Natural killer cell (primary cell): ENCODE measurements at regions of chr3 and their contacts with region 1.

Region 1: DNA sequence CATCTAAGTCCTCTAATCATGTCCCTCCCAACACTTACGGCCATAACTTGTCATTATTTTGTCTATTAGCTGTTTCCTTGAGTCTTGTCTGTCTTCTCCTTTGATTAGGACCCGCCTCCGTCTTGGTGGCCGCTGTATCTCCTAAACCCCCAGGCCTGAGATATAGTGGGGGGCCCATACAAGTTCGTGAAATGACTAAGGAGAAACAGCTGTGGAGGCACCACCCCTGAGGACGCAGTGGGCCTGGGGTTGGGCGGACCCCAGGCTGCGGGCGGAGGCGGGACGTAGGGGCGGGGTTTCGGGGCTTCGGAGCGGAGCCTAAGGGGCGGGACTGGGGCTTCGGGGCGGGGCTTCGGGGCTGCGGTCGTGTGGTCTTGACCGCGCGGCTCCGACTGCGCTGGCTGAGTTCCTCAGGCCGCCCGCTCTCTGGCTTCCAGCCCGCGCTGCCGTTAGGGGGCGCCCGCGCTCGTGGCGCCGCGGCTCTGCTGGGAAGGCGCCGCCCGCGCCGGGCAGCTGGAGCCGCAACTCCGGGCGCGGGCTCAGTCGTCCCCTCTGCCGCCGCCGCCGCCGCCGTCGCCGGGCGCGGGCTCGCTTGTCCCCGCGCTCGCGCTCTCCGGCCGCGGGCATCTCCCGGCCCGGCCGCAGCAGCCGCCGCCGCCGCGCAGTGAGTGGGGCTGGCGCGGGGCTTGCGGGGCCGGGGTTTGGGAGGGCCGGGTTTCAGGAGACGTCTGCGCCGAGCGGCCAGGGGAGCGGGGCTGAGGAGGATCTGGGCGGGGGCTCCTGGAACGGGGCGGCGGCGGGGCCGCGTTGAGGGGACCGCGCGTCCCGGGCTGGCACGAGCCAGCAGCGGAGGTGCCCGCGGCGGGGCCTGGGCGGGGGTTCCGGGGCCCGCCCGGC is at the start of gene KCTD6:
- DNase-seq: peak; percentile 91 to 93
- ATAC-seq: peak; percentile 88 to 97 (median 93)
- H3K4me3 ChIP-seq: peak within 1 kb of the TSS; percentile 72
- H3K4me3 Mint-ChIP-seq: peak within 1 kb of the TSS; percentile 94
- H3K27ac ChIP-seq: peak within 1 kb of the TSS; percentile 54
- H3K27ac Mint-ChIP-seq: peak within 1 kb of the TSS; percentile 68 to 87
- H3K4me1 ChIP-seq: peaks cover 25% of the 10 kb centered on the region
- H3K4me1 Mint-ChIP-seq: peaks cover 45 to 57% of the 10 kb centered on the region in 2 donors
- H3K27me3 ChIP-seq: no peaks in the 10 kb centered on the region
- H3K27me3 Mint-ChIP-seq: peaks cover 7 to 10% of the 10 kb centered on the region in 2 donors
- CTCF ChIP-seq: peak; percentile 52
- total RNA-seq, gene KCTD6: 4.5 to 12.9 (median 7.5) TPM

Region 2: DNA sequence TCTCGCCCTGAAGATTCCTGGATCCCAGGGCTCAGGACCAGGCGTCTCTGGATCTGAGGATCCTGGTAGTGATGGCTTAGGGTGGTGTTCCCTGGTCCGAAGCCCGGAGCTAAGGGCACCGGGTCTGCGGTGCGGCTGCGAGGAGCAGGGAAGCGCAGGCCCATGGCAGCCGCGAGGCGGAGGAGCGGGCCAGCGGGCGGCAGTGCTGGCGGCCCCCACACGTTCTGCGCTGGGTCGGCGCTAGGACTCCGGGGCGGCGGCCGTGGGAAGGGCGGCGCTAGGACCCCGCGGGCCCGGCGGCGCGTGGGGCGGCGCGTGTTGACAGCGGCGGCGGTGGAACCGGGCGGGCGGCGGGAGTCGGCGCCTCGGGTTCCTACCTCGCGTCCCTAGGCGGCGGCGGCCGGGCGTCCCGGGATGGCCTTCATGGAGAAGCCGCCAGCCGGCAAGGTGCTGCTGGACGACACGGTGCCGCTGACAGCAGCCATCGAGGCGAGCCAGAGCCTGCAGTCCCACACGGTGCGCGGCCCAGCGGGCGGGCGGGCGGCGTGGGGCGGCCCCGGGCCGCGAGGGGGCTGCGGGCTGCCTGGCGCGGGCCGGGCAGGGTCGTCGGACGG is 159.1 kb before region 1 on chr3 and contains the start of gene PXK:
- intact Hi-C with region 1: loop called (anchors 1 kb)
- DNase-seq: peak; percentile 84 to 85
- ATAC-seq: peak; percentile 79 to 93 (median 90)
- H3K4me3 ChIP-seq: peak within 1 kb of the TSS; percentile 81
- H3K4me3 Mint-ChIP-seq: peak within 1 kb of the TSS; percentile 99
- H3K27ac ChIP-seq: peak within 1 kb of the TSS; percentile 17
- H3K27ac Mint-ChIP-seq: peak within 1 kb of the TSS; percentile 87 to 91
- H3K4me1 ChIP-seq: peaks cover 13% of the 10 kb centered on the region
- H3K4me1 Mint-ChIP-seq: peaks cover 33 to 45% of the 10 kb centered on the region in 2 donors
- H3K27me3 ChIP-seq: no peaks in the 10 kb centered on the region
- H3K27me3 Mint-ChIP-seq: no peaks in the 10 kb centered on the region
- CTCF ChIP-seq: peak; percentile 10
- total RNA-seq, gene PXK: 42.1 to 53.8 (median 48.9) TPM

Region 3: DNA sequence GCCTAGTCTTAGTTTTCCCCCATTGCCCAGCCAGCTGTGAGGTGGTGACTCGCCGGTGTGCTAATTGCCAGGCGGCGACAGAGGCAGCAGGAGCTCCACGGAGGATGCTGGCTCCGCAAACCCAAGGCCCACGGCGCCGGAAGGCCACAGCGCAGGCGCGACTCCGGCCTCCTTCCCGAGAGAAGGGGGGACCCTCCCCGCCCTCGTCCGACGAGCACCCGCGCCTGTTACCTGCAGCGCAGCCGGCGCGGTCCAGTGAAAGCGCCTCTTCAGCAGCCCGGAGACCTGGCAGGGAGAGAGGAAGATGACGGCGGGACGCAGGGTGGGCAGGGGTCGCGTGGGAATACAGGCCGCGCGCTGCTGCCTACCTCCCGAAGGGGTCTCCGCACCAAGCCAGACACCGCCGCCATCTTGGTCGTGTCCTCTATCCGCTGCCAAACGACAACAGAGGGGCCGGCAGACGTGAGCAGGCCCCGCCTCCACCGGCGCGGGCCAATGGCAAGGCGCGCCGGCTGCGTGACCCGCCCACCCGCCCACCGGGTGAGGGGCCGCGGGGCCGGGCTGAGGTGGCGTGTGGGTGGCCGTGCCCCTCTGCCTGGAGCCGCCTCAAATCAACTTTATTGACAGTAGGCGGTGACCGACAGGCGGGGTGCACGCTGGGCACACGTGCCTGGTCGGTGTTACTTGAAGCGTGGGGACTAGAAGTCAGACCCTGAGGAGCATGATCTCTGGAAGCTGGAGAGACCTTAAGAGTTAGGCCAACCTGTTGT is 58.2 kb before region 1 on chr3 and contains the start of gene PDHB:
- intact Hi-C with region 1: loop called (anchors 2 kb)
- DNase-seq: peak; percentile 83 to 93
- ATAC-seq: peak; percentile 94 to 98 (median 95)
- H3K4me3 ChIP-seq: peak within 1 kb of the TSS; percentile 86
- H3K4me3 Mint-ChIP-seq: peak within 1 kb of the TSS; percentile 90
- H3K27ac ChIP-seq: peak within 1 kb of the TSS; percentile 82
- H3K27ac Mint-ChIP-seq: peak within 1 kb of the TSS; percentile 89 to 96
- H3K4me1 ChIP-seq: peaks cover 12% of the 10 kb centered on the region
- H3K4me1 Mint-ChIP-seq: peaks cover 19 to 22% of the 10 kb centered on the region in 2 donors
- H3K27me3 ChIP-seq: no peaks in the 10 kb centered on the region
- H3K27me3 Mint-ChIP-seq: peaks cover 0 to 7% of the 10 kb centered on the region in 2 donors
- CTCF ChIP-seq: no peak
- total RNA-seq, gene PDHB: 33.7 to 52.4 (median 39.9) TPM

Region 4: GRCh38 chr3:58471025-58471887 is 20.5 kb before region 1 on chr3:
- intact Hi-C with region 1: loop called (anchors 2 kb)
- DNase-seq: peak; percentile 28 to 64
- ATAC-seq: peak; percentile 90 to 98 (median 95)
- H3K4me3 ChIP-seq: no peak overlapping the region
- H3K4me3 Mint-ChIP-seq: peak overlapping the region; percentile 62
- H3K27ac ChIP-seq: peak overlapping the region; percentile 59
- H3K27ac Mint-ChIP-seq: peak overlapping the region; percentile 65 to 77
- H3K4me1 ChIP-seq: peaks cover 37% of the 10 kb centered on the region
- H3K4me1 Mint-ChIP-seq: peaks cover 30 to 35% of the 10 kb centered on the region in 2 donors
- H3K27me3 ChIP-seq: no peaks in the 10 kb centered on the region
- H3K27me3 Mint-ChIP-seq: peaks cover 0 to 3% of the 10 kb centered on the region in 2 donors
- CTCF ChIP-seq: no peak